ENCODE measurements at regions of chr2 and their contacts with region 1.

Region 1: GRCh38 chr2:182784777-182785176 is 68.7 kb downstream of the DNAJC10 start:
- DNase-seq: peak; percentile 65
- H3K4me3 ChIP-seq: no peak overlapping the region
- H3K27ac ChIP-seq: no peak overlapping the region
- H3K4me1 ChIP-seq: peaks cover 2% of the 10 kb centered on the region
- H3K27me3 ChIP-seq: no peaks in the 10 kb centered on the region
- CTCF ChIP-seq: peak; percentile 24 to 38
- POLR2A ChIP-seq: no peak

Region 2: GRCh38 chr2:182971820-182972547 is 187.2 kb after region 1 on chr2:
- CTCF ChIA-PET with region 1: interaction called, 10 read pairs
- POLR2A ChIA-PET with region 1: no interaction called
- dilution Hi-C with region 1: no loop called
- intact Hi-C with region 1: no loop called
- DNase-seq: no peak
- H3K4me3 ChIP-seq: no peak overlapping the region
- H3K27ac ChIP-seq: no peak overlapping the region
- H3K4me1 ChIP-seq: peaks cover 6% of the 10 kb centered on the region
- H3K27me3 ChIP-seq: no peaks in the 10 kb centered on the region
- CTCF ChIP-seq: no peak
- POLR2A ChIP-seq: no peak

Region 3: DNA sequence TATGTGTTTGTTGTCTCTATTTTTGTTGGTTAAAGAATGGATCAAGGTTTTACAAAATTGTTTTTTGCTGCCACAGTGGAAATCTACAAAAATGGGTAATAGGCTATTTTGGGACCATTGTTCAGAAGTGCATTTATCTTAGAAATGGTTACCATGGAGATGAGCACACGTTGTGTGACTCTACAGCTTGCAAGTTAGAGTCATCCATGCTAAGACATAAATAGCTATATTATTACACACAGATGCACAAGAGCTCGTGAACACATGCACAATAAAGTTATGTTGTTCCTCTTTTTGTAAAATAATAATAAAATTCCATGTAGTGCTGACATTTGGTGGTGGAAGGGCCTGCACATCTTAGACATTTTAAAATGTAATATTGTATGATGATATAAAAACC is 278.3 kb after region 1 on chr2:
- CTCF ChIA-PET with region 1: no interaction called
- POLR2A ChIA-PET with region 1: no interaction called
- dilution Hi-C with region 1: no loop called
- intact Hi-C with region 1: no loop called
- DNase-seq: peak; percentile 42
- H3K4me3 ChIP-seq: no peak overlapping the region
- H3K27ac ChIP-seq: no peak overlapping the region
- H3K4me1 ChIP-seq: peaks cover 7% of the 10 kb centered on the region
- H3K27me3 ChIP-seq: peaks cover 2 to 11% of the 10 kb centered on the region in 2 experiments
- CTCF ChIP-seq: no peak
- POLR2A ChIP-seq: no peak

Measured in endothelial cell of umbilical vein (primary cell).